Activated CD4-positive, alpha-beta T cell treated with anti-CD3 and anti-CD28 coated beads, Interleukin-2, amount 10 ng/mL, durations not matched to agents 24 days and 14 days (primary cell): ENCODE measurements at regions of chr7 and their contacts with region 1.

Region 1: DNA sequence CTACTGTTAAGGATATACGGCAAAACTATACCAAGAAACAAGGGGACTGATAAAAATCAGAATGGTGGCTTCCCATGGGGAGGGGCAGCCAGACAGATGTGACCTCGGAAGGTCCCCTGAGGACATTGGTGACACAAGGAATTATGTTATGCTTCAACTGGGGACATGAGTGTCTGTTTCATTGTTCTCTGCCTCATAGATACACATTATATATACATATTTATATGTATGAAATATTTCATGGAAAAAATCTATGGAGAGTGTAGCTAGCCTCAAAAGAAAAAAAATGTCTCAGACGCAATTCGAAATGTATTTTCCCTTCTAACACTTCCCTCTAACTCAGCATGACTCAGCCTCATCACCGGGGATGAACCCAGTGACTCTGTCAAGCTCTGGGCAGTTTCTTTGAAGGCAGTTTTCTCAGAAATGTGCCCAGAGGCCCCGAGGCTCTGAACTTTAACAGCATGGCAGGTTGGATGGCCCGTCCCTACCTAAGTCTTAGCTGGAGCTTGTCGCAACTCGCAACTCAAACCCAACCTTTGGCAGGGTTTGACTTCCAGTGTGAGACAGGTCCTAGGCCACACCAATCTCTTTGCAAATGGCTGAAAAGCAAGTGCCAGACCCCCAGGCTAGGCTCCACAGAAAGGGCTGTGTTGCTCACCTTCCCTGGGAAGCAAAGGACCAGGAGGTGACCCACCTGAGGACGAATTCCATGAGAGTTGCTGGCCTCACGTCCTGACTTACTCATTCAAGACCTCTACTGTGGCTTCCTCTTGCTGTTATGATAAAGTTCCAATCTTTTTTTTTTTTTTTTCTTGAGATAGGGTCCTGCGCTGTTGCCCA is 86.9 kb downstream of the CARD11 start:
- DNase-seq: peak; percentile 80
- H3K4me3 Mint-ChIP-seq: peak overlapping the region; percentile 55
- H3K27ac Mint-ChIP-seq: peak overlapping the region; percentile 87
- H3K4me1 Mint-ChIP-seq: peaks cover 60% of the 10 kb centered on the region
- H3K27me3 Mint-ChIP-seq: no peaks in the 10 kb centered on the region

Region 2: GRCh38 chr7:2750004-2750407 is 206.7 kb before region 1 on chr7:
- intact Hi-C with region 1: no loop called
- DNase-seq: no peak
- H3K4me3 Mint-ChIP-seq: no peak overlapping the region
- H3K27ac Mint-ChIP-seq: no peak overlapping the region
- H3K4me1 Mint-ChIP-seq: peaks cover 6% of the 10 kb centered on the region
- H3K27me3 Mint-ChIP-seq: no peaks in the 10 kb centered on the region

Region 3: GRCh38 chr7:3028071-3028757 is 71.5 kb after region 1 on chr7:
- intact Hi-C with region 1: loop called (anchors 5 kb)
- DNase-seq: peak; percentile 68
- H3K4me3 Mint-ChIP-seq: peak overlapping the region; percentile 66
- H3K27ac Mint-ChIP-seq: peak overlapping the region; percentile 87
- H3K4me1 Mint-ChIP-seq: peaks cover 34% of the 10 kb centered on the region
- H3K27me3 Mint-ChIP-seq: no peaks in the 10 kb centered on the region

Region 4: DNA sequence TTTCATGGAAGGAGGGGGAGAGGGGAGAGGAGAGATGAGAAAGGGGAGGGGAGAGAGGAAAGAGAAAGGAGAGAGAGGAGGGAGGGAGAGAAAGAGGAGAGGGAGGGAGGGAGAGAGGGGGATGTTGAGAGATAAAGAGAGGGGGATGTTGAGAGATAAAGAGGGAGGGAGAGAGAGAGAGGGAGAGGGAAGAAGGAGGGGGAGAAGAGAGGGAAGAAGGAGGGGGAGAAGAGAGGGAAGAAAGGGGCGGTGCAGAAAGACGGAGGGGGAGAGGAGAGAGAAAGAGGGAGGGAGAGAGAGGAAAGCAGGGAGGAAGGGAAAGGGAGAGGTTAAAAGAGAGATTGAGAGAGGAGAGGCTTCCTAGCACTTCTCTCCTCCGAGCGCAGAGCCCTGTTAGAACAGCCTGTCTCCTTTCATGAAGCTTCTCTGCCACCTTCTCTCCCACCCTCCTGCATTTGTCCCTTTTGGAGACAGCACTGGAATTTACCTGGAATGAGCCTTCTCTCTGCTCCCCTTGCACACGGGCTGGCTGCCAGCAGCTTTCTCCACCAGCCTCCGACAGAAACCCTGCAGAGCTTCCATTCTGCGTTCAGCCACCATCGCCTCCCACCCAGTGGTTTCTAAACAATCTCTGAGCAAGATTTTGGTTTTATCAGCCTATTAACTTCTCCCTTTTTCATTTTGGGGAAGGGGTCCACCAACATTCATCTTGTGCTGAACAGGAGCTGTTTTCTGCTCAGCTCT is 160.9 kb after region 1 on chr7:
- intact Hi-C with region 1: loop called (anchors 5 kb)
- DNase-seq: peak; percentile 70
- H3K4me3 Mint-ChIP-seq: peak overlapping the region; percentile 79
- H3K27ac Mint-ChIP-seq: peak overlapping the region; percentile 83
- H3K4me1 Mint-ChIP-seq: peaks cover 56% of the 10 kb centered on the region
- H3K27me3 Mint-ChIP-seq: peaks cover 4% of the 10 kb centered on the region